Heart right ventricle (tissue), 16 donors: ENCODE measurements at regions of chr10 and their contacts with region 1.

Region 1: DNA sequence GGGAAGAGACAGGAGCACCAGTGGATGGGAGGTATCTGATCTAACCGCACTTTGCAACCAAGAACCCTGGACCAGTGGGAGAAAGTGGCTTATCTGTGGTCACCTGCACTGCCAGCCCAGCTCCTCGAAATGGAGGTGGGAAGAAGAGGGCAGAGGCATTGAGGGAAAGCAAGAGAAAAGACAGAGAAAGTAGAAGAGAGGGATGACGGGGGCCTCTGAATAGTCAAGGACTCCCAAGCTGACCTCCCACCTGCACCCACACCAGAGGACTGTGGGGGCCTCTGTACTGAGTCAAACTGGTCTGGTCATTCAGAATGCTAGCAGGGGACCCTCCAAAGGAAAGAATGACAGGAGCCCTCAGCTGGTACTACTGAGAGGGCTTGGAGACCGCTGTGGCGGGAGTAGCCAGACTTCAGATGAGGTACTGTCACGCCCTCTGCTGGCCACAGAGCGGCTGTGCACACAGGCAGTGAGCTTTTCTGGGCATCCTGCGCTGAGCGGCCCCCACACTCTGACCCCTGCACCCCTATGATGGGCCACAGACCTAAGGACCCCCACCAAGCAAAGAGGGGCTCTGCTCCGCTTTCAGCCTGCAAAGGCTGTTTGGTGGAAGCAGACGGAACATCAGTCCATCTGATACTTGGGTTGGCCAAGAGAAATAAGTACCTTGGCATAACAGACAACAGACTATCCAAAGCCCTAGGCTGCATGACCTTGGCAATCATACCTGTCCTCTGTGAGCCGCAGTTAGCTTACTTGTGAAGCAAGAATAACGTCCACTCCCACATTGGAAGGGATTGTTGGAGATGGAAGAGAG is 112.9 kb downstream of the COL13A1 start:
- DNase-seq: peak; percentile 70 to 71
- ATAC-seq: peak; percentile 50 to 80 (median 76)
- H3K4me3 ChIP-seq: no peak overlapping the region
- H3K27ac ChIP-seq: no peak overlapping the region
- H3K4me1 ChIP-seq: peaks cover 0 to 33% (median 19%) of the 10 kb centered on the region in 9 donors
- H3K27me3 ChIP-seq: peaks cover 0 to 6% (median 0%) of the 10 kb centered on the region in 7 donors
- CTCF ChIP-seq: peak; percentile 80 to 95 (median 94)

Region 2: GRCh38 chr10:69644658-69645295 is 269.8 kb before region 1 on chr10:
- intact Hi-C with region 1: loop called (anchors 2 to 5 kb)
- DNase-seq: peak; percentile 40 to 57
- ATAC-seq: peak in 6 of 8 donors; percentile 42 to 69 (median 58)
- H3K4me3 ChIP-seq: no peak overlapping the region
- H3K27ac ChIP-seq: no peak overlapping the region
- H3K4me1 ChIP-seq: no peaks in the 10 kb centered on the region
- H3K27me3 ChIP-seq: peaks cover 0 to 41% (median 12%) of the 10 kb centered on the region in 7 donors
- CTCF ChIP-seq: peak; percentile 62 to 90 (median 80)

Region 3: GRCh38 chr10:69731184-69731583 is 183.4 kb before region 1 on chr10:
- intact Hi-C with region 1: loop called in 1 of 10 experiments (anchors 10 kb)
- DNase-seq: no peak
- ATAC-seq: peak in 4 of 8 donors; percentile 3 to 23 (median 17)
- H3K4me3 ChIP-seq: no peak overlapping the region
- H3K27ac ChIP-seq: peak overlapping the region in 8 of 10 donors; percentile 80 to 92 (median 83)
- H3K4me1 ChIP-seq: peaks cover 31 to 87% (median 55%) of the 10 kb centered on the region in 9 donors
- H3K27me3 ChIP-seq: no peaks in the 10 kb centered on the region
- CTCF ChIP-seq: no peak

Region 4: GRCh38 chr10:69800109-69800508 is 114.5 kb before region 1 on chr10:
- intact Hi-C with region 1: loop called in 9 of 10 experiments (anchors 1 to 10 kb)
- DNase-seq: peak in 1 of 2 donors; percentile 55
- ATAC-seq: peak in 5 of 8 donors; percentile 27 to 69 (median 55)
- H3K4me3 ChIP-seq: no peak overlapping the region
- H3K27ac ChIP-seq: no peak overlapping the region
- H3K4me1 ChIP-seq: peaks cover 2 to 30% (median 16%) of the 10 kb centered on the region in 9 donors
- H3K27me3 ChIP-seq: peaks cover 0 to 43% (median 7%) of the 10 kb centered on the region in 7 donors
- CTCF ChIP-seq: peak in 8 of 9 donors; percentile 44 to 76 (median 69)